AG04449 (cell line): ENCODE measurements at regions of chr1 and their contacts with region 1.

Region 1: DNA sequence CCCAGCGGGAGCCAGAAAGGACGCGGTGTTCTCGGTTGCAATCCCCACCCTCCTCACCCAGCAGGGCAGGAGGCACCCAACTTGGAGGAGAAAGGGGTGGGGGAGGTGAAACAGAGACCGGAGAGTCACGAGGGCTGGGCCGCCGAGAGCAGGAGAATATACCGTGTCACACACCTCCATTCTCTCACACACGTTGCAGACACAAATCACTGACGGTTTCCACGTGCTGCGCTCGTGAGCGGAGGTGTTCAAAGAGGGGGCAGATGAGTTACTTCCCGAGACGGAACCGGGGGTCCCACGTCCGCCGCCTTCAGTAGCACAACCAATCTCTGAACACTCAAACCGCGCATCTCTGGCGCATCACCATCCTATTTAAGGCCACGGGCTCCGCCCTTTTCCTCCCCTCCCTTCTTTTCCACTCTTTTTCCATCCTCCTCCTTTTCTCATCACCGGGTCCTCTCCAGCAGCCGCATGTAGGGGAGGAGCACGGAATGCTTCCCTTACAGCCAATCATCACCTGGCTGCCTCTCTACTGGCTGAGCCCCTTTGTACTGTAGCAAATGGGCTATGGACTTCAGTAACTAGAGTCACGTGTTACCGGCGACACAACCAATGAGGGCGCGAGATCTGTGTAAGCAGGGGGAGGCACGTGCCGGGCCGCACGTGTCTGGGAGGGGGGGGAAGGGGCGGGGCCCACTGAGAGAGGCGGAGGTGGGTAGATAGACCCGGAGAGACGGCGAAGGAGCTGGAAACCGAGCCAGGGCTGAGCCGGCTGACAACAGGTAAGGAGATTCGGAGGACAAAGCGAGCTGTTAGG is at the start of gene CIART:
- DNase-seq: peak; percentile 96
- H3K4me3 ChIP-seq: peak within 1 kb of the TSS; percentile 91
- CTCF ChIP-seq: no peak

Region 2: DNA sequence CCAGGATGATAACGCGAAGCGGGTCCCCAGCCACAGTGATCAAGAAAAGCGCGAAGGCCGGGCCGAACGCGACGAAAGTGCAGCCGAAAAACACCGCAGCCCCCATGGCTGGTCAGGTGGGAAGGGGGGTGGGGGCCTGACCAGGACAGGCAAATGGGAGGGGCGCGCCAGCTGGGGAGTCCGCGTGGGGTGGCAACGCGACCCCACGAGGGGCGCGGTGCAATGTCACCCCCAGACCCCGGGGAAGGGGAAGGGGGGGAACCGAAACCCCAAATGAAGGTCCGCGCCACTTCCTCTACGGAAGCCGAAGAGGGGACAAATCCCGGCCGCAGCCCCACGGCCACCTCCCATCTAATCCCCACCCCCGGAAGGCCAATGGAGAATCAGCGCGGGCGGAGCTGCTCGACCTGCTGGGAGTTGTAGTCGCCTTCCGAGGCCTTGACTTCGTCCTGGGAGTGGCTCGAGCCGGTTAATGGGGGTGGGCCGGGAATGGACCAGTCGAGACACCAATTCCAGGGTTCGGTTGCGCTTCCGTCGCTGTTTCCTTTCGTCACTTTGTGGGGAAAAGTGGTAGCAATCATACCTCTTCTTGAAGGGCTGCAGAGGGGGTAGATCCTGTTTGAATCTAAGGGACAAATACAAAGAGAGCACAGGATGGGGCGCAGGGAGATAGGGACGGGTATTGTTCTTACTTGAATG is 13.2 kb before region 1 on chr1 and contains the start of gene APH1A:
- CTCF ChIA-PET with region 1: interaction called, 623 read pairs
- POLR2A ChIA-PET with region 1: interaction called, 6 read pairs
- DNase-seq: peak; percentile 82
- H3K4me3 ChIP-seq: peak within 1 kb of the TSS; percentile 91
- CTCF ChIP-seq: no peak